ENCODE measurements at regions of chr11 and their contacts with region 1.

Region 1: DNA sequence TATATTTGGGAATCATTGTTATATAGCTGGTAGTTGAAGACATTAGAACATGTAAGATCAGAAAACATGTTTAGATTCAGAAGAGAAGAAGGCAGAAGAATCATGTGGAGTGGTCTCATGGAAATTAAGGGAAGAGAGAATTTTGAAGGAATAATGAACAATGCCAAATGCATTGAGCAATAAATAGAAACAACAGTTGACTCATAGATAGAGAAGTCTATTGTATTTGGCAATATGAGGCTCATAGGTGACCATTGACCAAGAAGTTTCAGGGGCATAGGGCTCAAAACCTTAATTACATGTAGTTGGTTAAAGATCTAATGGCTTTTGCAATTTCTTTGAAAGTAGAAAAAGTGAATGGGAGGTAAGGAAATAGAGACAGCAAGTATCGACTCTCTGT is 123.9 kb downstream of the PAX6 start:
- DNase-seq: no peak
- ATAC-seq: no peak
- H3K4me3 ChIP-seq: no peak overlapping the region
- H3K27ac ChIP-seq: no peak overlapping the region
- H3K4me1 ChIP-seq: no peaks in the 10 kb centered on the region
- H3K27me3 ChIP-seq: no peaks in the 10 kb centered on the region
- CTCF ChIP-seq: no peak
- EP300 ChIP-seq: no peak
- POLR2A ChIP-seq: no peak
- RAD21 ChIP-seq: no peak

Region 2: DNA sequence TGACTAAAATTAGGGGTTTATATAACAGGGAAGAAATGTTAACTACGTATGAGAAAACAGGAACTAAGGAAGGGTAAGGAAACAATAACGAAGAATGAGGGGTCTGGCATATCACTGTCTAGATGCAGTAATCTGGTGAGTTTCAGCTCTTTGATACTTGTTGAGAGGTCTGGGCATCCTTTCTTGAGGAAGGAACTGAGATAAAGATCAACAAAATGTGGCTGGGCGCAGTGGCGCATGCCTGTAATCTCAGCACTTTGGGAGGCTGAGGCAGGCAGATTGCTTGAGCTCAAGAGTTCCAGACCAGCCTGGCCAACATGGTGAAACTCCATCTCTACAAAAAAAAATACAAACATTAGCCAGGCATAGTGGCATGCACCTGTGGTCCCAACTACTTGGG is 320.5 kb before region 1 on chr11:
- CTCF ChIA-PET with region 1: no interaction called
- POLR2A ChIA-PET with region 1: no interaction called
- RAD21 ChIA-PET with region 1: no interaction called
- SMC1A ChIA-PET with region 1: no interaction called
- in situ Hi-C with region 1: no loop called
- intact Hi-C with region 1: no loop called
- DNase-seq: no peak
- ATAC-seq: no peak
- H3K4me3 ChIP-seq: no peak overlapping the region
- H3K27ac ChIP-seq: no peak overlapping the region
- H3K4me1 ChIP-seq: no peaks in the 10 kb centered on the region
- H3K27me3 ChIP-seq: no peaks in the 10 kb centered on the region; a peak in 1 of 4 replicates
- CTCF ChIP-seq: no peak
- EP300 ChIP-seq: no peak
- POLR2A ChIP-seq: no peak
- RAD21 ChIP-seq: no peak

Region 3: GRCh38 chr11:31671681-31672080 is 15.6 kb before region 1 on chr11:
- CTCF ChIA-PET with region 1: interaction called, 3 read pairs
- POLR2A ChIA-PET with region 1: no interaction called
- RAD21 ChIA-PET with region 1: no interaction called
- SMC1A ChIA-PET with region 1: interaction called, 12 read pairs
- in situ Hi-C with region 1: no loop called
- intact Hi-C with region 1: no loop called
- DNase-seq: no peak
- ATAC-seq: no peak
- H3K4me3 ChIP-seq: no peak overlapping the region
- H3K27ac ChIP-seq: no peak overlapping the region
- H3K4me1 ChIP-seq: no peaks in the 10 kb centered on the region
- H3K27me3 ChIP-seq: no peaks in the 10 kb centered on the region
- CTCF ChIP-seq: no peak
- EP300 ChIP-seq: no peak
- POLR2A ChIP-seq: no peak
- RAD21 ChIP-seq: no peak

Measured in GM12878 (cell line).